ENCODE measurements at regions of chr5 and their contacts with region 1.

Region 1: GRCh38 chr5:151659001-151659754 is 27.5 kb downstream of the SPARC start:
- DNase-seq: peak; percentile 77 to 96
- H3K4me3 ChIP-seq: no peak overlapping the region
- H3K27ac ChIP-seq: no peak overlapping the region
- H3K4me1 ChIP-seq: peaks cover 0 to 5% (median 0%) of the 10 kb centered on the region in 4 experiments; a peak in 1 of 7 replicates
- H3K27me3 ChIP-seq: no peaks in the 10 kb centered on the region
- CTCF ChIP-seq: peak; percentile 76 to 98 (median 87)
- EP300 ChIP-seq: no peak
- POLR2A ChIP-seq: no peak
- RAD21 ChIP-seq: peak; percentile 92 to 99

Region 2: GRCh38 chr5:151675611-151676313 is 16.6 kb after region 1 on chr5:
- CTCF ChIA-PET with region 1: interaction called, 72 read pairs
- POLR2A ChIA-PET with region 1: interaction called, 6 read pairs
- DNase-seq: no peak
- H3K4me3 ChIP-seq: no peak overlapping the region
- H3K27ac ChIP-seq: no peak overlapping the region
- H3K4me1 ChIP-seq: peaks cover 3 to 18% (median 10%) of the 10 kb centered on the region in 4 experiments; a peak in 5 of 7 replicates
- H3K27me3 ChIP-seq: no peaks in the 10 kb centered on the region
- CTCF ChIP-seq: no peak
- EP300 ChIP-seq: no peak
- POLR2A ChIP-seq: no peak
- RAD21 ChIP-seq: no peak

Region 3: DNA sequence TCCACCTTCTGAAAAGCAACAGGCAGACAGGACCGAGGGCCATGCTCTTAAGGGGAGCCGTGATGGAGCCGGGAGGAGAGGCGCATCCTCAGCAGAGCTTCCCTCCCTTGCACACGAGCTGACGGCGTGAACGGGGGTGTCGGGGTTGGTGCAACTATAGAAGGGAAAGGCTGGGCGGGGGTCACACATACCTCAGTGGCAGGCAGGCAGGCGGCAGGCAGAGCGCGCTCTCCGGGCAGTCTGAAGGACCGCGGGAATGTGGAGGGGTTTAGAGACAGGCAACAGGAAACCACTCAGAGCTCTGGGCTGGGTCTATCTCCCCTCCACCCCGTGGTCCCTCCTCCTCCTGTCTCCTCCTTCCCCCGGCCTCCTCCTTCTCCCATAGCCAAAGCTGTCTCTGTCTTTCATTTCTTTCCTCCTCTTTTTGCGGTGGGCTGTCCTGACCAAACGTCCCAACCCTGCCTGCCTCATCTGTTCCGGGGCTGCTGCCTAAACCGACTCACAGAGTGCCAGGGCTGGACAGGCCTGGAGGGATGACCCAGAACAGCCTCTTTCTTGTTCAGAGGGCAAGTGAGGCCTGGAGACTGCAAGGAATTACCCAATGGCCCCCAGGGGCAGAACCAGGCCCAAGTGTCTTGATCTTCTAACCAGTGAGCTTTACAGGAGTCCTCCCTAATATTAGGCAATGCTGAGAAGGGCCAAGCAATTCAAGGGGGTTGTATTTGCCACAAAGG is 27.7 kb after region 1 on chr5 and contains the start of gene SPARC:
- CTCF ChIA-PET with region 1: interaction called, 23 read pairs
- POLR2A ChIA-PET with region 1: interaction called, 7 read pairs
- DNase-seq: peak; percentile 56 to 77
- H3K4me3 ChIP-seq: peak within 1 kb of the TSS; percentile 64 to 79 (median 72)
- H3K27ac ChIP-seq: no peak within 1 kb of the TSS
- H3K4me1 ChIP-seq: peaks cover 3 to 23% (median 15%) of the 10 kb centered on the region in 4 experiments
- H3K27me3 ChIP-seq: no peaks in the 10 kb centered on the region
- CTCF ChIP-seq: no peak
- EP300 ChIP-seq: no peak
- POLR2A ChIP-seq: peak; percentile 27 to 94
- RAD21 ChIP-seq: no peak; a peak in 1 of 4 replicates
- total RNA-seq, gene SPARC: 438 and 452 TPM in 2 replicates

Region 4: DNA sequence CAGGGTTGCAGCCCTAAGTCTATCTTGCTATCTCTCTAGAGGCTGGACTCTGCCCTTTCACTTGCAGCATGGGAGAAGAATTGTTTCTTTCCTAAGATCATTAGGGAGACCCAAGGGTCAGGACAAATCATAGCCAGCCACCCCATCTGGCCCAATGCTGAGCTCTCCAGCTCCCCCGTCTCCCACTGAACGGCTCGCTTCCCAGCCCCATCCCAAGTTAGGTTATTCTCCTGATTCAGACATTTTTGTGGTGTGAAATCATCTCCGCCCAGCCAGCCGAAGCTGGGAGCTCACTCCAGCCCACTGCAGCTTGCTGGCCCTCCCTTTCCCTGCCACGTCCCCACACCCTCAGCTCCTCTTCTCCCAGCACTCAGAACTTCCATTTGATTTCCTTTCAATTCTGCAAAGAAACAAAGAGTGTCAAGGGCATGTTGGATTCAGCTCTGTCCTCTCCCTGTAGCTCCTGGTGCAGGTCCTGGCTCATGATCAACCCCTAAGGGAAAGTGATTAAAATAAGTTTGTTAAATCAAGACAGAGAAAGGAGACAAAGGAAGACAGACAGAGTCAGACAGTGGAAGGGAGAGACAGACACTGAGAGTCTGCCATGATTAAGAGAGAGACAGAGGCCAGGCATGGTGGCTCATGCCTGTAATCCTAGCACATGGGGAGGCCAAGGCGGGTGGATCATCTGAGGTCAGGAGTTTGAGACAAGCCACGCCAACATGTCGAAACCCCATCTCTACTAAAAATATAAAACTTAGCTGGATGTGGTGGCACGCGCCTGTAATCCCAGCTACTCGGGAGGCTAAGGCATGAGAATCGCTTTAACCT is 40.1 kb after region 1 on chr5:
- CTCF ChIA-PET with region 1: interaction called, 20 read pairs
- POLR2A ChIA-PET with region 1: interaction called, 3 read pairs
- DNase-seq: no peak
- H3K4me3 ChIP-seq: no peak overlapping the region
- H3K27ac ChIP-seq: no peak overlapping the region
- H3K4me1 ChIP-seq: peaks cover 3 to 14% (median 6%) of the 10 kb centered on the region in 4 experiments
- H3K27me3 ChIP-seq: no peaks in the 10 kb centered on the region
- CTCF ChIP-seq: no peak
- EP300 ChIP-seq: no peak
- POLR2A ChIP-seq: no peak
- RAD21 ChIP-seq: no peak

Region 5: GRCh38 chr5:151758430-151759241 is 99.5 kb after region 1 on chr5 and contains the start of gene ATOX1:
- CTCF ChIA-PET with region 1: interaction called, 991 read pairs
- POLR2A ChIA-PET with region 1: no interaction called
- DNase-seq: peak in 1 of 2 experiments; percentile 94
- H3K4me3 ChIP-seq: peak within 1 kb of the TSS; percentile 61 to 90 (median 72)
- H3K27ac ChIP-seq: peak within 1 kb of the TSS; percentile 28; the same call in 1 of the 2 replicates
- H3K4me1 ChIP-seq: peaks cover 5 to 14% (median 7%) of the 10 kb centered on the region in 4 experiments
- H3K27me3 ChIP-seq: no peaks in the 10 kb centered on the region
- CTCF ChIP-seq: no peak
- EP300 ChIP-seq: no peak
- POLR2A ChIP-seq: peak; percentile 77 to 93
- RAD21 ChIP-seq: no peak
- total RNA-seq, gene ATOX1: 77.9 and 79.9 TPM in 2 replicates

Region 6: DNA sequence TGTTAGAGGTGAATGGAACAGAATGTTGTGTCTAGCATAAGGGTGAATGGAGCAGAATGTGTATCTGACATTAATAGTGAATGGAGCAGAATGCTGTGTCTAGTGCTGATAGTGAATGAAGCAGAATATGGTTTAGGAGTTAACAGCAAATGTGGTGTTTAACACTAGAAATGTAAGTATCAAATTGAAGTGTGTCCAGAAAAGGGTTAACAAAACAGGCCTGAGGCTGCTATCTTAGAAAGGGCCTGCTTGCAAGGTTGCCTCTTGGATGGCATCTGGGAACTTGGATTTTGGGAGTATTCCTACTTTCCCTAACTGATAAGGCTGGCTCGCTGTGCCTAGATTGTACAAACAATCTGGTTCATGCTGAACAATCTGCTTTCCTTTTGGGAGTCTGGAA is 188.7 kb after region 1 on chr5:
- CTCF ChIA-PET with region 1: no interaction called
- POLR2A ChIA-PET with region 1: no interaction called
- DNase-seq: no peak
- H3K4me3 ChIP-seq: no peak overlapping the region
- H3K27ac ChIP-seq: no peak overlapping the region
- H3K4me1 ChIP-seq: no peaks in the 10 kb centered on the region
- H3K27me3 ChIP-seq: no peaks in the 10 kb centered on the region; a peak in 1 of 7 replicates
- CTCF ChIP-seq: no peak
- EP300 ChIP-seq: no peak
- POLR2A ChIP-seq: no peak
- RAD21 ChIP-seq: no peak